Caco-2 (cell line): ENCODE measurements at regions of chr7 and their contacts with region 1.

Region 1: DNA sequence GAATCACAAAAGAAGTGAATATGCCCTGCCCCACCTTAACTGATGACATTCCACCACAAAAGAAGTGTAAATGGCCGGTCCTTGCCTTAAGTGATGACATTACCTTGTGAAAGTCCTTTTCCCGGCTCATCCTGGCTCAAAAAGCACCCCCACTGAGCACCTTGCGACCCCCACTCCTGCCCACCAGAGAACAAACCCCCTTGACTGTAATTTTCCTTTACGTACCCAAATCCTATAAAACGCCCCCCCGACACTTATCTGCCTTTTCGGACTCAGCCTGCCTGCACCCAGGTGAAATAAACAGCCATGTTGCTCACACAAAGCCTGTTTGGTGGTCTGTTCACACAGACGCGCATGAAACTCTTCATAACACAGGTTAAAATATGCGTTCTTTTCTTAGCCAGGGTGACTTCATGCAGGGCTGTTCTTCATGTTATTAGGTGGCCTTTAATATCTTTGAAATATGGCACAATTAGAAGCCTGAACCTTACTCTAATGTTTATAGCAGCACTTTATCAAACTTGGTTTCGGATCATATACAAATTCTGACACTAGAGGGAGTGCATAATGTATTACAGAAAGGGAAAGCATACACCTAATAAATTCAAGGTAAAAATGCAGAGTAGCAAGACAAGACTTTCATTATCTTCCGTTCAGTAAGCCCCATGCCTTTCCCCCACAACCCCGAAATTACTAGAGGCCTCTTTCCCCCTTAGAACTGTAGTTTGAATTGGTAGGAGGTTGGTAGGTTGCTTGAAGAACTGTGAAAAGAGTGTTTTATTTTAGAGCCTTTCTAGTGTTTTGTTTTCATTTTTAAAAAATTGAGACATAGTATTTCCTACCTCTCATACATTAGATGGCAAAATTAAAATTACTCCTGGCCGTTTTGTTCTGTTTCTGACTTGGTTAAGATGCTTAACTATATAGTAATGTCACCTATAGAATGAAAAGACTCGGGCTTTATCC is 117.9 kb downstream of the NPY start:
- DNase-seq: peak in 1 of 2 experiments; percentile 20
- H3K4me3 ChIP-seq: no peak overlapping the region
- H3K4me3 Mint-ChIP-seq: no peak overlapping the region
- H3K27ac Mint-ChIP-seq: no peak overlapping the region
- H3K4me1 ChIP-seq: peaks cover 11% of the 10 kb centered on the region; the same call in 1 of the 2 replicates
- H3K4me1 Mint-ChIP-seq: peaks cover 6% of the 10 kb centered on the region
- H3K27me3 ChIP-seq: no peaks in the 10 kb centered on the region
- H3K27me3 Mint-ChIP-seq: no peaks in the 10 kb centered on the region
- CTCF ChIP-seq: peak; percentile 32 to 37

Region 2: DNA sequence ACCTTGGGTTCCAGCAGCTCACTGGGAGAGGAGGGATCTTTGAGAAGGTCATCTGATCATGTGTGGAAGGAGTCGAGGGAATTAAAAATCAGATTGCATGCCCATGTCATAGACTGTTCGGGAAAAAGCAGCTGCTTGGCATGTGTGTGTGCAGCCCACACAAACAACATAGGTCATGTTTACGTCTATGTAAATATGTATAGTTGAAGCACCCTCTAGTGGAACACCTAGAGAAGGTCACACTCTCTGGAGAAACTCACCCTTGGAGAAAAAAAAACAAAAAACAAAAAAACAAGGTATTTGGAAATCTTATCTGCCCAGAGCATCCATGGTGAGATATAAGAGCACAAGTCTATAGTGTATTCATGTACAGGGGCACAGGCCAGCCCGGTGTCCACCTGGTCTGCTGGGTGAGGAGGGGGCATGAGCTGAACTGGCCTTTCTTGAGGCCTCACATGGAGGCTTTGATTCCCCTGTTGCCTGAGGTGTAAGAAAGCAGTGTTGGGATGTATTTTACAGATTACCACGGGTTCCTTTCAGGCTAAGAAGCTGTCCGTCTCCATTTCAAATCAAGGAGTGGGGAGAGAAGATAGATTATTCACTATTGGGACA is 19.9 kb before region 1 on chr7:
- CTCF ChIA-PET with region 1: no interaction called
- POLR2A ChIA-PET with region 1: no interaction called
- intact Hi-C with region 1: no loop called
- DNase-seq: peak in 1 of 2 experiments; percentile 19
- H3K4me3 ChIP-seq: no peak overlapping the region
- H3K4me3 Mint-ChIP-seq: no peak overlapping the region
- H3K27ac Mint-ChIP-seq: no peak overlapping the region
- H3K4me1 ChIP-seq: no peaks in the 10 kb centered on the region
- H3K4me1 Mint-ChIP-seq: no peaks in the 10 kb centered on the region
- H3K27me3 ChIP-seq: no peaks in the 10 kb centered on the region
- H3K27me3 Mint-ChIP-seq: peaks cover 2% of the 10 kb centered on the region
- CTCF ChIP-seq: peak; percentile 60 to 65

Region 3: GRCh38 chr7:24494832-24495231 is 92.9 kb after region 1 on chr7:
- CTCF ChIA-PET with region 1: no interaction called
- POLR2A ChIA-PET with region 1: no interaction called
- intact Hi-C with region 1: loop called (anchors 10 kb)
- DNase-seq: no peak
- H3K4me3 ChIP-seq: no peak overlapping the region
- H3K4me3 Mint-ChIP-seq: no peak overlapping the region
- H3K27ac Mint-ChIP-seq: no peak overlapping the region
- H3K4me1 ChIP-seq: no peaks in the 10 kb centered on the region; the same call in 1 of the 2 replicates
- H3K4me1 Mint-ChIP-seq: peaks cover 7% of the 10 kb centered on the region
- H3K27me3 ChIP-seq: no peaks in the 10 kb centered on the region
- H3K27me3 Mint-ChIP-seq: no peaks in the 10 kb centered on the region
- CTCF ChIP-seq: peak in 1 of 2 experiments; percentile 9